ENCODE measurements at regions of chr4 and their contacts with region 1.

Region 1: GRCh38 chr4:140252742-140253555 is 99.0 kb upstream of the MAML3 start:
- DNase-seq: peak; percentile 75
- ATAC-seq: peak; percentile 81
- H3K4me3 ChIP-seq: peak overlapping the region in 4 of 5 experiments; percentile 50 to 78 (median 68)
- H3K4me3 Mint-ChIP-seq: peak overlapping the region; percentile 78
- H3K27ac ChIP-seq: peak overlapping the region in 1 of 2 donors; percentile 11
- H3K27ac Mint-ChIP-seq: no peak overlapping the region
- H3K4me1 ChIP-seq: peaks cover 9 to 15% of the 10 kb centered on the region in 2 donors
- H3K4me1 Mint-ChIP-seq: peaks cover 10% of the 10 kb centered on the region
- H3K27me3 ChIP-seq: peaks cover 0 to 16% (median 5%) of the 10 kb centered on the region in 4 experiments
- H3K27me3 Mint-ChIP-seq: peaks cover 43% of the 10 kb centered on the region
- CTCF ChIP-seq: peak; percentile 94

Region 2: GRCh38 chr4:139619644-139620043 is 633.3 kb before region 1 on chr4:
- CTCF ChIA-PET with region 1: interaction called, 3 read pairs
- POLR2A ChIA-PET with region 1: no interaction called
- intact Hi-C with region 1: loop called (anchors 5 kb)
- DNase-seq: peak; percentile 15
- ATAC-seq: no peak
- H3K4me3 ChIP-seq: no peak overlapping the region
- H3K4me3 Mint-ChIP-seq: no peak overlapping the region
- H3K27ac ChIP-seq: no peak overlapping the region
- H3K27ac Mint-ChIP-seq: no peak overlapping the region
- H3K4me1 ChIP-seq: no peaks in the 10 kb centered on the region
- H3K4me1 Mint-ChIP-seq: no peaks in the 10 kb centered on the region
- H3K27me3 ChIP-seq: no peaks in the 10 kb centered on the region
- H3K27me3 Mint-ChIP-seq: peaks cover 9% of the 10 kb centered on the region
- CTCF ChIP-seq: peak; percentile 57

Region 3: DNA sequence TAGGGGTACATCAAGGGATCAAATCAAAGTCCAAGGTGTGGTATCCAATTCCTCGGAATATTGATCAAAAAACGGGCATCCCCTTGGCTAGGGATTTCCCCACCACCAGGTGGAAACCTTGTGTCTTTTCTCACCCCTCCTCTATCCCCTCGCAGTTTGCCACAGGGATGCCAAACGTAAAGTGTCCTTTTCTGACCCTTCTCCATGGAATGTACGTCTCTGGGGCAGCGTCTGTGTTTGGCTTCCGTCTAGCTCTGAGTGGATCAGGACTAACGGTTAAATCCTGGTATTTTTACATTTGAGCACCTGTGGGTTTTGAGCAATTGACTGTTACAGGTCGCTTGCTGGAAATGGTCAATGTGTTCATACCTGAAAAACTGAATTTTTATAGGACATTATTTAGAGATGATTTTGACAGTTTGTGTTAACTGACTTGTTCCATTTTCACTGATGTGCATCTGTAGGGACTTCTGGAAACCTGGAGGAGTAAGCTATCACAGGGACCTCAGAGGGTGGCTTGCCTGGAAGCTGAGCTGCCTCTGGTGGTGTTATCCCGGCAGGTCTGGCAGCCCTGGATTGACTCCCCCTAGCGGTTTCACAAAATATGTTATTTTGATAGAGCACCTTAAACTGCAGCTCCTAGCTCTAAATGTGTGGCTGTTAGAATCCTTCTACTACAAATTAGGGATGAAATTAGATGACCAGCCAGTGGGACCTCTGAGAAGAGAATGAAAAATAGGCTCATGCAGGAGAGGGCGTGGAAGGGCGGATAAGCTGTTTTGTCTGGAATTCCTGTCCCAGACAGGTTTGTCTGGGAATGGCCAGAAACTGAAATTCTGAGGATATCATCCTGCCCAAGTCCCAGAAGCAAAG is 596.1 kb before region 1 on chr4:
- CTCF ChIA-PET with region 1: interaction called, 36 read pairs
- POLR2A ChIA-PET with region 1: no interaction called
- intact Hi-C with region 1: loop called (anchors 1 kb)
- DNase-seq: peak; percentile 71
- ATAC-seq: peak; percentile 78
- H3K4me3 ChIP-seq: no peak overlapping the region
- H3K4me3 Mint-ChIP-seq: no peak overlapping the region
- H3K27ac ChIP-seq: no peak overlapping the region
- H3K27ac Mint-ChIP-seq: no peak overlapping the region
- H3K4me1 ChIP-seq: no peaks in the 10 kb centered on the region
- H3K4me1 Mint-ChIP-seq: peaks cover 2% of the 10 kb centered on the region
- H3K27me3 ChIP-seq: no peaks in the 10 kb centered on the region
- H3K27me3 Mint-ChIP-seq: peaks cover 13% of the 10 kb centered on the region
- CTCF ChIP-seq: peak; percentile 89

Region 4: GRCh38 chr4:140012688-140013486 is 240.1 kb before region 1 on chr4:
- CTCF ChIA-PET with region 1: interaction called, 112 read pairs
- POLR2A ChIA-PET with region 1: no interaction called
- intact Hi-C with region 1: loop called (anchors 1 kb)
- DNase-seq: peak; percentile 75
- ATAC-seq: peak; percentile 87
- H3K4me3 ChIP-seq: no peak overlapping the region
- H3K4me3 Mint-ChIP-seq: no peak overlapping the region
- H3K27ac ChIP-seq: no peak overlapping the region
- H3K27ac Mint-ChIP-seq: no peak overlapping the region
- H3K4me1 ChIP-seq: peaks cover 0 to 5% of the 10 kb centered on the region in 2 donors
- H3K4me1 Mint-ChIP-seq: peaks cover 7% of the 10 kb centered on the region
- H3K27me3 ChIP-seq: peaks cover 0 to 4% (median 2%) of the 10 kb centered on the region in 4 experiments
- H3K27me3 Mint-ChIP-seq: peaks cover 15% of the 10 kb centered on the region
- CTCF ChIP-seq: peak; percentile 77

Region 5: DNA sequence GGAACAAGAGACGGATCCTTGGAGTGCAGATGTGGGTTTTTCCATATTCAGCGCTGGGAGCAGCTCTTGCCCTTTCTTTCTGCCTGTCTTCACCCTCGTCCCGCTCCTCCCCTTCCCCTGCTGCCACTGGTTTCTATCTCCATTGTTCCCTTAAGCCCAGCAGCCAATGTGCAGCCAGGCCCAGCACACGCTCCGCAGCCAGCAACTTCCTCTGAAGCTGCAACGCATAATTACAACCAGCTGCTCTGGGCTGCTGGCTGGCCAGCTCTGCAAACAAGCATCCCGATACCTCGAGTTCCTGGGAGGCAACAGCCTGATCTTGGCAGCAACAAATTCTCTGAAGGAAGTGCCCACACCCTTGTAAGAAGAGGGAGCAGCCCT is 15.4 kb before region 1 on chr4:
- CTCF ChIA-PET with region 1: interaction called, 54 read pairs
- POLR2A ChIA-PET with region 1: no interaction called
- intact Hi-C with region 1: loop called (anchors 2 kb)
- DNase-seq: peak; percentile 19
- ATAC-seq: no peak
- H3K4me3 ChIP-seq: no peak overlapping the region
- H3K4me3 Mint-ChIP-seq: peak overlapping the region; percentile 15
- H3K27ac ChIP-seq: no peak overlapping the region
- H3K27ac Mint-ChIP-seq: peak overlapping the region; percentile 21
- H3K4me1 ChIP-seq: peaks cover 53 to 55% of the 10 kb centered on the region in 2 donors
- H3K4me1 Mint-ChIP-seq: peaks cover 62% of the 10 kb centered on the region
- H3K27me3 ChIP-seq: peaks cover 0 to 6% (median 2%) of the 10 kb centered on the region in 4 experiments
- H3K27me3 Mint-ChIP-seq: peaks cover 27% of the 10 kb centered on the region
- CTCF ChIP-seq: no peak

Measured in B cell (primary cell).